AG04449 (cell line): ENCODE measurements at regions of chr1 and their contacts with region 1.

Region 1: GRCh38 chr1:157490467-157491165 is 61.7 kb downstream of the FCRL5 start:
- DNase-seq: no peak
- H3K4me3 ChIP-seq: no peak overlapping the region
- CTCF ChIP-seq: peak; percentile 72

Region 2: GRCh38 chr1:157363660-157364140 is 126.9 kb before region 1 on chr1:
- CTCF ChIA-PET with region 1: interaction called, 53 read pairs
- POLR2A ChIA-PET with region 1: no interaction called
- DNase-seq: no peak
- H3K4me3 ChIP-seq: no peak overlapping the region
- CTCF ChIP-seq: peak; percentile 66

Region 3: DNA sequence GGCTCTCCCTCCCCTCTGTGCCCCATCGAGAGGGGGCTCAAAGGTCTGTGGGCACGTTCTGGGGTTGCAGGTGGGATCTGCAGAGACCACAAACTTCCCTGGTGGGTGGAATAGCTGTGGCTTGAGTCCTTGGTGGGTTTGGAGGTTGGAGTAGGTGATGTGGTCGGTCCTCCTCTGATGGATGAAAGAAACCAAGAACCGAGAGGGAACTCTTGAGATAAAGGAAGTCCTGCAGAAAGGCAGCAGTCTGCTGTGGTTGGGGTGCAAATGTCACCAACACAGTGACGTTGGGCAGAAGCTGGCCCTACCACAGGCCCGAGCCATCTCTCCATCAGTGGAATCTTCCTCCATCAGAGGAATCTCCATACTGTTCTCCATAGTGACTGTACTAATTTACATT is 110.1 kb before region 1 on chr1:
- CTCF ChIA-PET with region 1: interaction called, 33 read pairs
- POLR2A ChIA-PET with region 1: no interaction called
- DNase-seq: no peak
- H3K4me3 ChIP-seq: no peak overlapping the region
- CTCF ChIP-seq: no peak